Activated CD4-positive, alpha-beta memory T cell treated with anti-CD3 and anti-CD28 coated beads for 36 hours (primary cell): ENCODE measurements at regions of chr10 and their contacts with region 1.

Region 1: GRCh38 chr10:79542626-79543025 is 17.6 kb downstream of the SFTPA2 start:
- DNase-seq: no peak
- H3K4me3 Mint-ChIP-seq: no peak overlapping the region
- H3K27ac Mint-ChIP-seq: no peak overlapping the region
- H3K4me1 Mint-ChIP-seq: no peaks in the 10 kb centered on the region
- H3K27me3 Mint-ChIP-seq: no peaks in the 10 kb centered on the region

Region 2: GRCh38 chr10:79438021-79438698 is 104.5 kb before region 1 on chr10:
- CTCF ChIA-PET with region 1: no interaction called
- POLR2A ChIA-PET with region 1: no interaction called
- intact Hi-C with region 1: no loop called
- DNase-seq: no peak
- H3K4me3 Mint-ChIP-seq: no peak overlapping the region
- H3K27ac Mint-ChIP-seq: no peak overlapping the region
- H3K4me1 Mint-ChIP-seq: peaks cover 13% of the 10 kb centered on the region
- H3K27me3 Mint-ChIP-seq: no peaks in the 10 kb centered on the region

Region 3: DNA sequence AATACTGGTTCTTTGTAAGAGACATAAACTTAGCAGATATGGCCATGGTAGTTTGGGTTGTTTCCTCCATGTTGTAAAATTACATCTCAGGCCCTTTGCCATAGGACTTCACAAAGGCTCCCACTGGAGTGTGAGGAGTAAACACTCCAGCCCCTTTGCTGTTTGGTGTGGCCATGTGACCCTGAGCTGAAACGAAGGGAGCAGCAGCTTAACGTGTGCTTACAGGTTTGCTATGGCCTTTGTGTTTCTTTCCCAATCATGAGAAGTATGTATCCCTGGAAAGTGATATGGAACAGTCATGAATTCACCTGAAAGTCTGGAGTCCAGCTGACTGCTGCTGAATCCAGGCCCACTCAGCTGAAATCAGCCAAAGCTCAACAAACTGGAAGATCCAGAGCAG is 44.3 kb after region 1 on chr10:
- CTCF ChIA-PET with region 1: no interaction called
- POLR2A ChIA-PET with region 1: no interaction called
- intact Hi-C with region 1: no loop called
- DNase-seq: no peak
- H3K4me3 Mint-ChIP-seq: no peak overlapping the region
- H3K27ac Mint-ChIP-seq: no peak overlapping the region
- H3K4me1 Mint-ChIP-seq: peaks cover 5% of the 10 kb centered on the region
- H3K27me3 Mint-ChIP-seq: peaks cover 21% of the 10 kb centered on the region

Region 4: GRCh38 chr10:79608505-79609375 is 66.1 kb after region 1 on chr10:
- CTCF ChIA-PET with region 1: interaction called, 19 read pairs
- POLR2A ChIA-PET with region 1: no interaction called
- intact Hi-C with region 1: loop called (anchors 2 kb)
- DNase-seq: peak; percentile 59
- H3K4me3 Mint-ChIP-seq: no peak overlapping the region
- H3K27ac Mint-ChIP-seq: no peak overlapping the region
- H3K4me1 Mint-ChIP-seq: no peaks in the 10 kb centered on the region
- H3K27me3 Mint-ChIP-seq: peaks cover 3% of the 10 kb centered on the region

Region 5: DNA sequence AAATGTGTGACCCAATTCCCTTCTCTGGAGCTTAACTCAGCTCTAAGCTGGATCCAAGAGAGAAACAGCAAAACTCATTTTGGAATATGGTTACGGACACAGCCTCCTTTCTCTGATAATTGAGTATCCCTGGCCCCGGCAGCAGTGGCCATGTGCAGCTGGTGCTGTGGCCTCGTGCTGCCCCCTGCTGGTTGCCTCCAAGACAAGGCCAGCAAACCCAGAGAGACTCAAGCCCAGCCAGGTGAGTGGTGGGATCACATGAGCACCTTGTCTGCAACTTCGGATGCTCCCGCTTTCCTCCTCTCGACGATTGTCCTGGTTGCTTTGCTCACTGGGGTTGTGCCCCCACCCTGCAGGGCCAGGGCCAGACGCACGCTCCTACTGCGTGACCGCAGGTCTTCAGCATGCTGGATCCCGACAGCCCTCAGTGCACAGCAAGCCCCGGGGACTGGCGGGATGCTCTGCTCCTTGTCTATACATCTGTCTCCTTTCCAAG is 386.8 kb after region 1 on chr10:
- CTCF ChIA-PET with region 1: interaction called, 7 read pairs
- POLR2A ChIA-PET with region 1: no interaction called
- intact Hi-C with region 1: loop called (anchors 1 kb)
- DNase-seq: peak; percentile 85
- H3K4me3 Mint-ChIP-seq: no peak overlapping the region
- H3K27ac Mint-ChIP-seq: no peak overlapping the region
- H3K4me1 Mint-ChIP-seq: peaks cover 5% of the 10 kb centered on the region
- H3K27me3 Mint-ChIP-seq: peaks cover 26% of the 10 kb centered on the region

Region 6: DNA sequence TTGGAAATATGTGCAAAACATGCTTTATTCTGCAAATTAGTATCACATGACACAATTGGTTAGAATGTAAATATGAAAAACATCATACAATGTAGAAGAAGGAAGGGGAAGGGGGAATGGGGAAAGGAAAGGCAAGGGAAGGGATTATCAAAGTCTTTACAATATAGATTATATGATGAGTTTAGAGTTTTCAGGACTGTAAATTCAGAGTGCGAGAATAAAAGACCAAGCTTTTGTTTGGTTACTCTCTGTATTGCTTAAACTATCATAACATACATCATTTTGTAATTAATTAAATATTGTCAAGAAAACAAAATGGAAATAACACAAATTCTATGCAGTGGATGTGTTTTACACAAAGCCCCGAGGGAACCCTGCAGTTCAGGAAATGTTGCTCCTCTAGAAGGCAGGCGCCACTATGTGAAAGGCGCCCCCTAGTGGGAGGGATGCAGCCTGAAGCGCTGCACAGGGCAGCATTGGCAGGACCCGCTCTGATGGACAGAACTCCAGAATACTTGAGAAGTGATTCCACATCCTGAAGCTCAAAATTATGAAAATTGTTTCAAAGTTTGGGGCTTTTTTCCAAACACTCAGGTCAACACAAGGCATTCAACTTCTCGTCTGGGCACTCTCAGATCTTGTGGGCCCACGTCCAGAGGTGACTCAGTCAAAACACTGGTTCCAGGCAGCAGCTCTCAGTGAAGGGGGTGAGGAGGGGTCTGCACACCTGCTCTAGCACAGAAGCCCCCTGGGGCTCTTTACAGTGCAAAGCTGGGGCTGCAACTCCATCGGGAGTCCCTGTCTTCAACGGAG is 504.2 kb after region 1 on chr10:
- CTCF ChIA-PET with region 1: interaction called, 3 read pairs
- POLR2A ChIA-PET with region 1: no interaction called
- intact Hi-C with region 1: loop called (anchors 1 kb)
- DNase-seq: peak; percentile 78
- H3K4me3 Mint-ChIP-seq: no peak overlapping the region
- H3K27ac Mint-ChIP-seq: no peak overlapping the region
- H3K4me1 Mint-ChIP-seq: no peaks in the 10 kb centered on the region
- H3K27me3 Mint-ChIP-seq: no peaks in the 10 kb centered on the region